Activated CD8-positive, alpha-beta T cell treated with anti-CD3 and anti-CD28 coated beads for 36 hours (primary cell): ENCODE measurements at regions of chr12 and their contacts with region 1.

Region 1: GRCh38 chr12:117836999-117837736 is 131.6 kb downstream of the KSR2 start:
- DNase-seq: peak; percentile 88
- ATAC-seq: peak; percentile 77
- H3K4me3 Mint-ChIP-seq: no peak overlapping the region
- H3K27ac Mint-ChIP-seq: no peak overlapping the region
- H3K4me1 Mint-ChIP-seq: no peaks in the 10 kb centered on the region
- H3K27me3 Mint-ChIP-seq: peaks cover 16% of the 10 kb centered on the region
- CTCF ChIP-seq: peak; percentile 94

Region 2: DNA sequence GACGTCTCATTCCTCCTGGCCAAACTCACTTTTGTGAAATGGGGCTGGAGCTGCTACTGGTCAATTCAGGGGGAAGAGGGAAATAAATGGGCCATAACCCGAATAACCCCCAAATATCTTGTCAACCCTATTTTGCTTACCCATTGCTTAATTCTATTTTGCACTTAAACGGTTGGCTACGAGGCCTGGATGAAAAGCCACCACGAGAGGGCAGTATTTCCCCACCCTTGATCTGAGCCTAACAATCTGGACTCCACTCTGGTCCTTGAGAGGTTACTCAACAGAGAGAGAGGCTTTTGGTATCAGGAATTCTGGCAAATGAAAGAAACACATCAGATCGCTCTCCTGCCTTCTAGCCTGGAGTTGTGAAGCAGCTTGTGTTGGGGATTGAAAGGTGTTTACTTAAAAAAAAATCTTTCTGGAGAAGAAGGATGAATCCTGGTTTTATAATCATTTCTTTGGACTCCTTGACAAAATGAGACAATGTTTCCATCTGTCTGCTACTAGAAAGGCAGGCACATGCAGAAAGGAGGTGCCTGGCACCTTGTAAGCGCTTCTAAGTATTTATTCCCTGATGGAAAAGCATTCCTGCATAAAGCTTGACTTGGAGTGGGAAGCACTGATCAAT is 624.5 kb before region 1 on chr12:
- CTCF ChIA-PET with region 1: interaction called, 14 read pairs
- POLR2A ChIA-PET with region 1: no interaction called
- intact Hi-C with region 1: loop called (anchors 5 kb)
- DNase-seq: peak; percentile 83
- ATAC-seq: peak; percentile 42
- H3K4me3 Mint-ChIP-seq: no peak overlapping the region
- H3K27ac Mint-ChIP-seq: no peak overlapping the region
- H3K4me1 Mint-ChIP-seq: no peaks in the 10 kb centered on the region
- H3K27me3 Mint-ChIP-seq: peaks cover 9% of the 10 kb centered on the region
- CTCF ChIP-seq: peak; percentile 79

Region 3: DNA sequence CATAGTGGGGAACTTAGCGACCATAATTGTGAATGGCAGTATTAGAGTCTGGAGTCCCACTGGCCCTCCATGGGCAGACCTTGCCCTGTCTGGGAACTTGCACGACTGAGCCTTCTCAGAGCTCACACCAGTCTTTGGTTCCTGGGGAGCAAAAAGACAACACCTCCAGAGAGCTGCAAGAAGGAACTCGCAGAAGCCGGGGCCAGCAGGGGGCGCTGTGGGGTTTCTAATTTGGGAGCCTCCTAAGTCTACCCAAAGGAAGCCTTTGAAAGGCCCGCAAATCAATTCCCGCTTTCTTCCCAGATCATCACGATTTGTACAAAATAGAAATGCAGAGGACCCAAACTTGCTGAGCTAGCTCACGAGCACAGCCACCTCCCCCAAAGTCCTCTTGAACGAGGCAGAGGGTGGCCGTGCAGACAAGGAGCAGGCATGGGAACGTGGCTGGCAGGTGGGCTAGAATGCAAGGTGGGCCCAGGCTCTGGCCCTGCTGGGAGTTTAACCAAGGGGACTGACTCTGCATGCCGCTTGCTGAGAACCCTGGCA is 600.6 kb before region 1 on chr12:
- CTCF ChIA-PET with region 1: interaction called, 19 read pairs
- POLR2A ChIA-PET with region 1: no interaction called
- intact Hi-C with region 1: loop called (anchors 2 kb)
- DNase-seq: peak; percentile 93
- ATAC-seq: peak; percentile 60
- H3K4me3 Mint-ChIP-seq: no peak overlapping the region
- H3K27ac Mint-ChIP-seq: no peak overlapping the region
- H3K4me1 Mint-ChIP-seq: no peaks in the 10 kb centered on the region
- H3K27me3 Mint-ChIP-seq: peaks cover 4% of the 10 kb centered on the region
- CTCF ChIP-seq: peak; percentile 89

Region 4: GRCh38 chr12:117367011-117367638 is 470.0 kb before region 1 on chr12:
- CTCF ChIA-PET with region 1: interaction called, 58 read pairs
- POLR2A ChIA-PET with region 1: no interaction called
- intact Hi-C with region 1: loop called (anchors 5 kb)
- DNase-seq: peak; percentile 72
- ATAC-seq: no peak
- H3K4me3 Mint-ChIP-seq: no peak overlapping the region
- H3K27ac Mint-ChIP-seq: no peak overlapping the region
- H3K4me1 Mint-ChIP-seq: no peaks in the 10 kb centered on the region
- H3K27me3 Mint-ChIP-seq: peaks cover 26% of the 10 kb centered on the region
- CTCF ChIP-seq: peak; percentile 80

Region 5: DNA sequence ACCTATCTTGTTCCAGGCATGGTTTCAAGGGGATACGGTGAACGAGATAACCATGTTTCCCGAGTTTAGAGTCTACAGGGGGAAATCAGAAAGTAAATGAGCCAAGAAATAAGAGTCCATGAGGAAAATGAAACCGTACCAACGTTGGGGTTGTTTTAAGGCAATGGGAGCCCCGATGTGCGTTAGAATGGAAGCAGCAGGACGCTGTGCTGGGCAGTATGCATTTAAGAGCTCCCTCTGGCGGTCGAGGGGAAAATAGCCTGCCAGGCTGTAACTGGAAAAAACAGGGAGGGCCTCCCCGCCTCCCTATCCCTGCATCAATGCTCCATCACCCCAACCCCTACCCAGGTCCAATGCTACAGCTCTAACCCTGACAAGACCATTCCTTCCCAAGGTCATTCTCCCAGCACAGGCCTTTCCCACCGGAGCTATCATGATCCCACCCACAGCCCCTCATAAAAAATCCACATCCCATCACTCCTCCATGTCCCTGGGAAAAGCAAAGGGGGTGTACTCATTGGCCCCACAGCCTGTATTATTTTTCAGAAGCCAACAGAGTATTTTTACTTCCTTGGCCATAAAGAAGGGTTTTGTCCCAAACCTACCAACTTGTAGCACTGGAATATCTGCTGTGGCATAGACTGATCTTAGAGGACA is 249.4 kb before region 1 on chr12:
- CTCF ChIA-PET with region 1: interaction called, 10 read pairs
- POLR2A ChIA-PET with region 1: no interaction called
- intact Hi-C with region 1: loop called (anchors 10 kb)
- DNase-seq: peak; percentile 59
- ATAC-seq: no peak
- H3K4me3 Mint-ChIP-seq: no peak overlapping the region
- H3K27ac Mint-ChIP-seq: no peak overlapping the region
- H3K4me1 Mint-ChIP-seq: no peaks in the 10 kb centered on the region
- H3K27me3 Mint-ChIP-seq: peaks cover 12% of the 10 kb centered on the region
- CTCF ChIP-seq: peak; percentile 74

Region 6: GRCh38 chr12:117850048-117850447 is 12.9 kb after region 1 on chr12:
- CTCF ChIA-PET with region 1: interaction called, 36 read pairs
- POLR2A ChIA-PET with region 1: interaction called, 3 read pairs
- intact Hi-C with region 1: no loop called
- DNase-seq: peak; percentile 17
- ATAC-seq: no peak
- H3K4me3 Mint-ChIP-seq: no peak overlapping the region
- H3K27ac Mint-ChIP-seq: no peak overlapping the region
- H3K4me1 Mint-ChIP-seq: no peaks in the 10 kb centered on the region
- H3K27me3 Mint-ChIP-seq: peaks cover 19% of the 10 kb centered on the region
- CTCF ChIP-seq: peak; percentile 83

Region 7: DNA sequence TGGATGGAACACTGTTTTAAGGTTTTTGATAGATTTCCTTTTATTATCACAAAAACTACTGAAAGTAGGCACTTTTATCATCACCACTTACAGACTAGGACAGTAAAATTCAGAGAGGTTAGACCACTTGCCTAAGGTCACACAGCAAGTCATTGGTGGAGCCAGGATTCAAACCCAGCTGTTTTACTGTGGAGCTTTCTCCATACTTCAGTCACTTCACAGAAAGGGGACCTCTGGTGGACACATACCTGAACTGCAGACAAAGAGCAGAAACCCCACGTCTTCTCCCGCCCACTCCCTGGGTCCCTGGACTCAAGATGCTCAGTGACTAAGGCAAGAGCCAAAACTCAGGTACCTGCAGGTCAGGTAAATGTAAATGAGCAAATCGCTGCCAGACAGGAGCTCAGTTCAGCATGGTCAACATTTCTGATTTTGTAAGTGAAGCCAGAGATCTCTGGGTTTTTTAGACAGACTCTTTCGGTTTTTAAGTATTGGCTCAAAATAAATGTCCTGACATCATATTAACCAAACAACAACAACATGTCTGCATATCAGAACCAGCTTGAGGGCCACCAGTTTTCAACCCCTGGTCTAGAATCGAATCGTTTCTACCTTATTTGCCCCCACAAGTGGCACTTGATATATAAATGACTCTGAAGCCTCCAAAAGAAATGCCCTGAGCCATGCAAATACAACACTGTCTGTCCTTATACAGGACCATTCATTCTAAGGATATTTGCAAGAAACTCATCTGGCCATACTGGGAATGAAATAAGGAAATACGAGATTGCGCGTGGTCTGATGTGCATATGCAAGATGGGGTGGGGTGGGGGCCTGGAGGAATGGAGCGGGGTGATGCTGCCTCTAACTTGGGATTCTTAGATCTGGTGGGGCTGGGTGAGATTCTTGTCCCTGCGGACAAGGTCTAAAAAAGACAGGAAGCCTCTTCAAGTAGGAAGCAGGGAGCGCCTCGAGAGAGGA is 20.8 kb after region 1 on chr12:
- CTCF ChIA-PET with region 1: interaction called, 22 read pairs
- POLR2A ChIA-PET with region 1: interaction called, 3 read pairs
- intact Hi-C with region 1: no loop called
- DNase-seq: peak; percentile 78
- ATAC-seq: peak; percentile 84
- H3K4me3 Mint-ChIP-seq: no peak overlapping the region
- H3K27ac Mint-ChIP-seq: no peak overlapping the region
- H3K4me1 Mint-ChIP-seq: no peaks in the 10 kb centered on the region
- H3K27me3 Mint-ChIP-seq: peaks cover 3% of the 10 kb centered on the region
- CTCF ChIP-seq: peak; percentile 57

Region 8: GRCh38 chr12:117900561-117900960 is 63.4 kb after region 1 on chr12:
- CTCF ChIA-PET with region 1: no interaction called
- POLR2A ChIA-PET with region 1: no interaction called
- intact Hi-C with region 1: no loop called
- DNase-seq: no peak
- ATAC-seq: no peak
- H3K4me3 Mint-ChIP-seq: no peak overlapping the region
- H3K27ac Mint-ChIP-seq: no peak overlapping the region
- H3K4me1 Mint-ChIP-seq: no peaks in the 10 kb centered on the region
- H3K27me3 Mint-ChIP-seq: no peaks in the 10 kb centered on the region
- CTCF ChIP-seq: no peak

Region 9: GRCh38 chr12:117986705-117987469 is 149.7 kb after region 1 on chr12:
- CTCF ChIA-PET with region 1: no interaction called
- POLR2A ChIA-PET with region 1: no interaction called
- intact Hi-C with region 1: no loop called
- DNase-seq: no peak
- ATAC-seq: peak; percentile 47
- H3K4me3 Mint-ChIP-seq: no peak overlapping the region
- H3K27ac Mint-ChIP-seq: no peak overlapping the region
- H3K4me1 Mint-ChIP-seq: no peaks in the 10 kb centered on the region
- H3K27me3 Mint-ChIP-seq: peaks cover 7% of the 10 kb centered on the region
- CTCF ChIP-seq: no peak

Region 10: DNA sequence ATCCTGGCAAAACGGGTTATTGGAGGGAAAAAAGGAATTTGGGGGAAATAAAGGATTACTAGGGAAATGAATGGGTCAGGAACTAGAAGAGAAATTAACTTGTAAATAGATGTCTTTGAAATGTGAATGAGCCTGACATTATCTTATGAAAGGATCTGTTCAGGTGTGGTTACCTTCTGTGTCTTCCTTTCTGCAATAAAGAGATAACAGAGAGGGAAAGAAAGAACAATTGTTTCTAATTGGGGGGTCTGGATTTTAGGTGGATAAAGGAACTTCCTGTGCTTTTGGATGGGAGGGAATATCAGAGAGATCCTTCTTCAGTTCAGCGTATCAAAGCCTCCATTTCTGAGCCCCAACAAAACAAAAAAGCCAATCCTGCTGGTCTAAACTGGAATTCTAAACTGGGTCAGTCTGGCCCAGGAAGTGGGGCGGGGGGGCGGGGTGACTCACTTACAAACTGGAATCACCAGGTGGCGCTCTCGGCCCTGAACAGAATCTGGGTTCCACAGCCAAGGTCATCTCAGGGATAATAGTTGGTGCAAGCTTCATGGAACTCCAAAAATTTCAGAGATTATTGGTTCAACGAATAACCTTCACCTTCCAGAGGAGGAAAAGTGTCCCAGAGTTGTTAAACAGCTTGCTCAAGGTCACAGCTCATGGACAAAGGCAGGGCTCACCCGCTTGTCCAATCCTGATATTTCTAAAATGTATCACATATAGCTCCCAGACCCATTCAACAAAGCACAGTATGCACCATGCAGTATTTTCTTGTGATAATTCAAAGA is 283.6 kb after region 1 on chr12:
- CTCF ChIA-PET with region 1: no interaction called
- POLR2A ChIA-PET with region 1: no interaction called
- intact Hi-C with region 1: no loop called
- DNase-seq: peak; percentile 79
- ATAC-seq: peak; percentile 66
- H3K4me3 Mint-ChIP-seq: no peak overlapping the region
- H3K27ac Mint-ChIP-seq: peak overlapping the region; percentile 79
- H3K4me1 Mint-ChIP-seq: peaks cover 8% of the 10 kb centered on the region
- H3K27me3 Mint-ChIP-seq: no peaks in the 10 kb centered on the region
- CTCF ChIP-seq: peak; percentile 93